Prostate gland (tissue), 2 donors: ENCODE measurements at regions of chr9 and their contacts with region 1.

Region 1: DNA sequence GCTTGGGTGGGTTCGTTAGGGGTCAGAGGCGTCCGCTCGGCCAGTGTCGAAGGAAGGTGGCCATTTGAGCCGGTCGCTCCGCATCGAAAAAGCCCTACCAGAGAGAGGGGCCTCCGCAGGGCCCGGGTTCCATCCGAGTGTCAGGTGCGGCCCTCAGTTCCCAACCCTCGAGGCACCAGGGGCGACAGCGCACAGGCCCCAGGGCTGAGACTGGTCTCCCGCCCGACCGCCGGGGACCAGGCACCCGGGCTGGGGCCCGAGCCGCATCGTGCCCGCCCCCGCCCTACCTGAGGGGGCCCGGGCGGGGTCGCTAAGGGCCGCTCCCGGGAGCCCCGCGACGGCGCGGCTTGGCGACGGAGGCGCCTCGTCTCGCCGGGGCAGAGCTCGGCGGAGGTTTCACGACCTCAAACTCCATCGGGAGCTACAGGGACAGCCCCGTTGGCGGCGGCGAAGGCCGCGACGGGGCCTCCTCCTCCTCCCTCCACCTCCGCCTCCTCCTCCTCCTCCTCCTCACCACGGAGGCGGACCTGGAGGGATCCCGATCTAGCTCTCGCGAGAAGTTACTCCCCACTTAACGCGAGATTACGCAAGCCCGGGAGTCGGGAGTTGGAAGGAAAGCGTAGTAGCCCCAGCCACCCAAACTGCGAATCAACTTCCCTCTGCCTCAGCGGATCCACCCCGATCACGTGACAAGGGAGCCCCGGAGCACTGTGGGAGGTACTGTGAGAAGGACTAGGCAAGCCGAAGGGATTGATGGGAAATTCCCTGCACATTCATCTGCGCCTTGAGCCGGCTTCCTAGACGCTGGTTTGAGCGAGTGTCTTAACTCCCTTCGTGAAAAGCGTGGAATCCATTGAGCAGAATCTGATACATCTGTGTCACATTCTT is at the start of gene RC3H2:
- DNase-seq: peak; percentile 97
- H3K4me3 ChIP-seq: peak within 1 kb of the TSS; percentile 85 to 98
- H3K27ac ChIP-seq: peak within 1 kb of the TSS; percentile 93 to 96
- H3K4me1 ChIP-seq: no peaks in the 10 kb centered on the region
- H3K27me3 ChIP-seq: no peaks in the 10 kb centered on the region
- CTCF ChIP-seq: peak in 2 of 4 experiments; percentile 3 to 18
- POLR2A ChIP-seq: peak; percentile 98
- total RNA-seq, gene RC3H2: 25.8 to 47.9 TPM

Region 2: GRCh38 chr9:122940603-122941559 is 35.8 kb after region 1 on chr9 and contains the start of gene RABGAP1:
- intact Hi-C with region 1: loop called (anchors 5 kb)
- DNase-seq: peak; percentile 99
- H3K4me3 ChIP-seq: peak within 1 kb of the TSS; percentile 83 to 91
- H3K27ac ChIP-seq: peak within 1 kb of the TSS; percentile 98 to 99
- H3K4me1 ChIP-seq: peaks cover 5% of the 10 kb centered on the region
- H3K27me3 ChIP-seq: no peaks in the 10 kb centered on the region
- CTCF ChIP-seq: peak in 1 of 4 experiments; percentile 2
- POLR2A ChIP-seq: peak; percentile 82
- total RNA-seq, gene RABGAP1: 59.8 to 104 TPM

Region 3: GRCh38 chr9:122991370-122991830 is 86.3 kb after region 1 on chr9:
- intact Hi-C with region 1: loop called (anchors 10 kb)
- DNase-seq: peak; percentile 10
- H3K4me3 ChIP-seq: no peak overlapping the region
- H3K27ac ChIP-seq: no peak overlapping the region
- H3K4me1 ChIP-seq: no peaks in the 10 kb centered on the region
- H3K27me3 ChIP-seq: no peaks in the 10 kb centered on the region
- CTCF ChIP-seq: peak; percentile 37 to 81 (median 68)
- POLR2A ChIP-seq: no peak